ENCODE measurements at regions of chr2 and their contacts with region 1.

Region 1: GRCh38 chr2:26964446-26965130 is 5.8 kb upstream of the MAPRE3 start:
- DNase-seq: no peak
- H3K4me3 ChIP-seq: no peak overlapping the region
- H3K27ac ChIP-seq: no peak overlapping the region
- H3K4me1 ChIP-seq: no peaks in the 10 kb centered on the region
- H3K27me3 ChIP-seq: peaks cover 3% of the 10 kb centered on the region
- CTCF ChIP-seq: no peak

Region 2: GRCh38 chr2:27016801-27017325 is 52.3 kb after region 1 on chr2:
- CTCF ChIA-PET with region 1: interaction called, 13 read pairs
- dilution Hi-C with region 1: no loop called
- in situ Hi-C with region 1: loop called (anchors 5 kb)
- intact Hi-C with region 1: loop called (anchors 1 kb)
- DNase-seq: peak; percentile 25
- H3K4me3 ChIP-seq: no peak overlapping the region
- H3K27ac ChIP-seq: no peak overlapping the region
- H3K4me1 ChIP-seq: peaks cover 20% of the 10 kb centered on the region
- H3K27me3 ChIP-seq: no peaks in the 10 kb centered on the region
- CTCF ChIP-seq: peak; percentile 63 to 71

Region 3: GRCh38 chr2:27162151-27163121 is 197.8 kb after region 1 on chr2:
- CTCF ChIA-PET with region 1: no interaction called
- dilution Hi-C with region 1: no loop called
- in situ Hi-C with region 1: no loop called
- intact Hi-C with region 1: no loop called
- DNase-seq: no peak
- H3K4me3 ChIP-seq: no peak overlapping the region
- H3K27ac ChIP-seq: no peak overlapping the region
- H3K4me1 ChIP-seq: peaks cover 4% of the 10 kb centered on the region
- H3K27me3 ChIP-seq: no peaks in the 10 kb centered on the region
- CTCF ChIP-seq: no peak

Measured in mammary epithelial cell (primary cell).